ENCODE measurements at regions of chr7 and their contacts with region 1.

Region 1: DNA sequence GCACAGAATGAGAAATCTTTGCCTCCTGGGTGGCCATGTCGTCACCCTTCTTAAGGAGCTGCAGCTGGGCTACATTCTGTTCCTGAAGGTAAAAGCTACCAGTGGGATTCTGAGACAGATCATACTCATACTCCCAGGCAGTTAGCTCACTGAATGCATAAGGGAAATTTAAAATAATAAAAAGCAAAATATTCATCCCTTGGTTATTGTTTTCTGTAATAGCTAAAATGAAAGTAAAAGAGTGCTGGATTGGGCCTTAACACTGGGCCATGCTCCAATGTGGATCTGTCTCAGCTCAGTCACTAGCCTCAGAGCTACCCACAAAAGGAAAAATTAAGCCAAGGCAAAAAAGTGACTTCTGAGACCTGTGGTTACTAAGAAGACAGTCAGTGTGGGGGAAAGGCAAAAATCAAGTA is 8.9 kb upstream of the DYNC2I1 start:
- DNase-seq: no peak
- ATAC-seq: no peak
- H3K4me3 ChIP-seq: no peak overlapping the region
- H3K27ac ChIP-seq: no peak overlapping the region
- H3K4me1 ChIP-seq: peaks cover 39% of the 10 kb centered on the region
- H3K27me3 ChIP-seq: no peaks in the 10 kb centered on the region; a peak in 1 of 5 replicates
- CTCF ChIP-seq: no peak
- EP300 ChIP-seq: no peak
- POLR2A ChIP-seq: no peak
- RAD21 ChIP-seq: no peak

Region 2: DNA sequence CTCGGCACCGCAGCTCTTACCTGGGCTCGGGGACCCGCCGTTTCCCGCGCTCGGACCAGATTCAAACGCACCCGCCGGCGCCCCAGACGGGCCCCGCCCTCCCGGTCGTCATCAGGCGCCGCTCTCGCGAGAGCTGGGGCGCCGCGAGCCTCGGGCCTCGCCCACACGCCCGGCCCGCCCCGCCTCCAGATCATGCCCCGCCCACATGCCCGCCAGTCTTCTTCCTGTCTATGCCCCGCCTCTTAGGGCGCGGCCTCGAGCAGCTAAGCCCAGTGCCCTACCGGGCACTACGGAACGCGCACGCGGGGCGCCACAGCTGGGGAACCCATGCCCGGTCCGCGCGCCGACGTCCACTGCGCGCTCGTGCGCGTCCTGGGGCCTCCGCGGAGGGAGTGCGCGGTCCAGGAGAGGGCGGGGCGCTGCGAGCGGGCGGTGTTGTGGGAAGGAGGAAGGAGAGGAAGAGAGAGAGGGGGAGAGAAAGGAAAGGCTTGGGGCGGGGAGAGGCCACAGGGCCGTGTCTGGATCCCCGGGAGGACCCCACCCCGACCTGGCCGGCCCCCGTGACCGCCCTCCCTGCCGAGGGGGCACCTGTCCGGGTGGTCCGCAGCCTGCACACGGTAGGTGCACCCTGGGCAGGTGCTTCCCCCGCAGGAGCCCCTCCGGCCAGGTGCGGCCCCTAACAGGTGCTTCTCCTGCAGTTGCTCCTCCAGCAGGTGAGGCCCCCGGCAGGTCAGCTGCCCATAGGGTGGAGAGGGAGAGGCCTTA is 142.6 kb before region 1 on chr7 and contains the start of gene NCAPG2:
- CTCF ChIA-PET with region 1: no interaction called
- POLR2A ChIA-PET with region 1: interaction called, 10 read pairs
- in situ Hi-C with region 1: no loop called
- intact Hi-C with region 1: no loop called
- DNase-seq: peak; percentile 94
- ATAC-seq: peak; percentile 96
- H3K4me3 ChIP-seq: peak within 1 kb of the TSS; percentile 77 to 99 (median 98)
- H3K27ac ChIP-seq: peak within 1 kb of the TSS; percentile 71
- H3K4me1 ChIP-seq: peaks cover 53% of the 10 kb centered on the region
- H3K27me3 ChIP-seq: no peaks in the 10 kb centered on the region; a peak in 1 of 5 replicates
- CTCF ChIP-seq: peak; percentile 41; the same call in 1 of the 2 replicates
- EP300 ChIP-seq: no peak
- POLR2A ChIP-seq: peak; percentile 34 to 84; a peak in 3 of 4 replicates
- RAD21 ChIP-seq: peak; percentile 35; the same call in 1 of the 2 replicates
- total RNA-seq, gene NCAPG2: 30.7 and 46.3 TPM in 2 replicates

Region 3: GRCh38 chr7:158818325-158819213 is 28.9 kb before region 1 on chr7:
- CTCF ChIA-PET with region 1: no interaction called
- POLR2A ChIA-PET with region 1: interaction called, 34 read pairs
- in situ Hi-C with region 1: no loop called
- intact Hi-C with region 1: no loop called
- DNase-seq: peak; percentile 91
- ATAC-seq: peak; percentile 98
- H3K4me3 ChIP-seq: peak overlapping the region; percentile 50 to 66 (median 55)
- H3K27ac ChIP-seq: peak overlapping the region; percentile 96
- H3K4me1 ChIP-seq: peaks cover 76% of the 10 kb centered on the region
- H3K27me3 ChIP-seq: no peaks in the 10 kb centered on the region
- CTCF ChIP-seq: peak; percentile 66
- EP300 ChIP-seq: peak in 1 of 2 experiments; percentile 46; a peak in 3 of 4 replicates
- POLR2A ChIP-seq: peak; percentile 38 to 79; a peak in 3 of 4 replicates
- RAD21 ChIP-seq: peak; percentile 83

Region 4: DNA sequence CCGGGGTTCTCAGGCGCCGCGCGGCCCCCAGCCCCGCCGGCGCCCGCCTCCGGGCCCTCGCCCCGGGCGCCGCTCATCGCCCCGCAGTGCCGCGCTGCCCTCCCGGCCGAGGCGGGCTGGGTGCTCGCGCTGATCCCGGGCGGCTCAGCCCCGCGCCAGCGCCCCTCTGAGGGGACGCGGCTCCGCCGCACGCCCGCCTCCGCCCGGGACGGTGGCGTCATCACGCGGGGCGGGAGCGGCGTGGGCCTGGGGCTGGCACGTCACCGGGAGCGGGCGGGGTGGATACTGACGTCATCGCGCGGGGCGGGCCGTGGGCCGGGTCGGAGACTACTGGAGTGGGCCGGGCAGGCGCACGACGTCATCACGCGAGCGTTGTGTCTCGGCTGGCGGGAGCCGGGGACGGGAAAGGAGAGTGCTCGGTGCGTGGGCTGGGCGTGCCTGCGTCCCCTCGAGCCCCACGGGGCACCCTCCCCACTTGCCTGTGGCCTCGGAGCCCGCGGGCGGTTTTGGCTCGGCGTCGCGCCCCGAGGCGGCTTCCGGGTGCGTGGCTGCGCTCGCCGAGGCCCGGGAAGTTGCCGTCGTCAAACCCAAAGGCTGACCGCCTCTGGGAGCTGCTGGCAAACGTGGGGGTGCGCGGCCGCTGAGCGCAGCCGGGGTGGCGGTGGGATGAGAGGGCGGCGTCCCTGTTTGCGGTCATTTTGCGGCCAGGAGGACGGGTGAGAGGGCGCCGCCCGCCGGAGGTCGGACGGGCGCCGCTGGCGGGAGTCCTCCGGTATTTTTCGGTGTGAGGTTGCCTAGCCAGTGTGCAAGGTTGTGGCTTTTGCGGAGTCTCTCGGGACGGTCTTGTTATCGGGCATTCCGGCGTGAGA is 17.9 kb before region 1 on chr7 and contains the start of gene ESYT2:
- CTCF ChIA-PET with region 1: no interaction called
- POLR2A ChIA-PET with region 1: interaction called, 30 read pairs
- in situ Hi-C with region 1: no loop called
- intact Hi-C with region 1: loop called (anchors 1 kb)
- DNase-seq: peak; percentile 83
- ATAC-seq: peak; percentile 77
- H3K4me3 ChIP-seq: peak within 1 kb of the TSS; percentile 77 to 96 (median 90)
- H3K27ac ChIP-seq: peak within 1 kb of the TSS; percentile 90
- H3K4me1 ChIP-seq: peaks cover 41% of the 10 kb centered on the region
- H3K27me3 ChIP-seq: no peaks in the 10 kb centered on the region; a peak in 1 of 5 replicates
- CTCF ChIP-seq: peak; percentile 58
- EP300 ChIP-seq: no peak
- POLR2A ChIP-seq: peak; percentile 88 to 95
- RAD21 ChIP-seq: peak; percentile 60
- total RNA-seq, gene ESYT2: 26.0 and 37.3 TPM in 2 replicates

Region 5: DNA sequence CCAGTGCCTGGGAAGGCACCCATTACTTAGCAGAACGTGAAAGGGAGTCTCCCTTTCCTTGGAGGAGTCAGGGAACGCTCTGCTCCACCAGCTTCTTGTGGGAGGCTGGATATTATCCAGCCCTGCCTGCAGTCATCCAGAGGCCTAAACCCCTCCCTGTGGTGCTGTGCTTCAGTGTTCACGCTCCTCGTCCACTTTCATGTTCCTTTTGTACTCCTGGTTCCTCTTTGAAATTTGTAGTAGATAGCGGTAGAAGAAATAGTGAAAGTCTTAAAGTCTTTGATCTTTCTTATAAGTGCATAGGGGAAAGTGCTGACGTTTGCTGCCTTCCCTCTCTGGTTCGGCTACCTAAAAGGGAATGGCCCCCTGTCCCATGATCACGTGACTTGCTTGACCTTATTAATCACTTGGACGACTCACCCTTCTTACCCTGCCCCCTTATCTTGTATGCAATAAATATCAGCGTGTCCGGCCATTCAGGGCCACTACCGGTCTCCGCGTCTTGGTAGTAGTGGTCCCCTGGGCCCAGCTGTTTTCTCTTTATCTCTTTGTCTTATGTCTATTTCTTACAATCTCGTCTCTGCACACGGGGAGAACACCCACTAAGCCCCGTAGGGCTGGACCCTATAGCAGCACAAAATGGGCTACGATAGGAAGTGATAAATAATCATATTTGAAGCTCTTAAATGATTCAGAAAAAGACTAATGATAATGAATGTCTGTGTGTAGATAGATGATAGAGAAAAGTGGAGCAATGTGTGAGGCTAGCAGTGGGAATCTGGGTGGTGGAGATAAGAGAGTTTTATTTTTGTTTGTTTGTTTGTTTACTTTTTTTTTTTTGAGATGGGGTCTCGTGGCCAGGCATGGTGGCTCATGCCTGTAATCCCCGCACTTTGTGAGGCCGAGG is 12.3 kb before region 1 on chr7:
- CTCF ChIA-PET with region 1: no interaction called
- POLR2A ChIA-PET with region 1: interaction called, 30 read pairs
- in situ Hi-C with region 1: no loop called
- intact Hi-C with region 1: no loop called
- DNase-seq: no peak
- ATAC-seq: no peak
- H3K4me3 ChIP-seq: peak overlapping the region; percentile 16 to 37 (median 33); a peak in 4 of 6 replicates
- H3K27ac ChIP-seq: no peak overlapping the region
- H3K4me1 ChIP-seq: peaks cover 37% of the 10 kb centered on the region
- H3K27me3 ChIP-seq: no peaks in the 10 kb centered on the region
- CTCF ChIP-seq: no peak
- EP300 ChIP-seq: no peak
- POLR2A ChIP-seq: no peak
- RAD21 ChIP-seq: no peak

Region 6: GRCh38 chr7:158863611-158864506 is 16.4 kb after region 1 on chr7:
- CTCF ChIA-PET with region 1: no interaction called
- POLR2A ChIA-PET with region 1: interaction called, 63 read pairs
- in situ Hi-C with region 1: no loop called
- intact Hi-C with region 1: no loop called
- DNase-seq: peak; percentile 38
- ATAC-seq: peak; percentile 70
- H3K4me3 ChIP-seq: peak overlapping the region; percentile 46 to 71 (median 67); a peak in 5 of 6 replicates
- H3K27ac ChIP-seq: peak overlapping the region; percentile 61
- H3K4me1 ChIP-seq: peaks cover 61% of the 10 kb centered on the region
- H3K27me3 ChIP-seq: no peaks in the 10 kb centered on the region
- CTCF ChIP-seq: no peak
- EP300 ChIP-seq: no peak; a peak in 1 of 4 replicates
- POLR2A ChIP-seq: peak in 1 of 2 experiments; percentile 49; a peak in 1 of 4 replicates
- RAD21 ChIP-seq: no peak

Region 7: DNA sequence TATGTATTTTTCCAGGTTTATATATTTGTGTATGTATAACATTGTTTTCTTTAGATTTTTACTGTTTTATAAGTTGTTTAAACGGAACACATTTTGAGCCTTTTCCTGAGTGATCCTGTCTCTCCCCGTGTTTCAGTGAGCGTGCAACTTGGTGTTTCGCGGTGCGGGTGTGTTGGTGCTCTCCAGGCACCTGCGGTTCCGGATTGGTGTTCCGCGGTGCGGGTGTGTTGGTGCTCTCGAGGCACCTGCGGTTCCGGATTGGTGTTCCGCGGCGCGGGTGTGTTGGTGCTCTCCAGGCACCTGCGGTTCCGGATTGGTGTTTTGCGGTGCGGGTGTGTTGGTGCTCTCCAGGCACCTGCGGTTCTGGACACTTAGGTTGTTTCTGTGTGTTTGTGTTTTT is 29.5 kb after region 1 on chr7:
- CTCF ChIA-PET with region 1: no interaction called
- POLR2A ChIA-PET with region 1: no interaction called
- in situ Hi-C with region 1: no loop called
- intact Hi-C with region 1: no loop called
- DNase-seq: no peak
- ATAC-seq: no peak
- H3K4me3 ChIP-seq: no peak overlapping the region
- H3K27ac ChIP-seq: no peak overlapping the region
- H3K4me1 ChIP-seq: no peaks in the 10 kb centered on the region
- H3K27me3 ChIP-seq: no peaks in the 10 kb centered on the region
- CTCF ChIP-seq: no peak
- EP300 ChIP-seq: no peak
- POLR2A ChIP-seq: no peak
- RAD21 ChIP-seq: no peak

Region 8: DNA sequence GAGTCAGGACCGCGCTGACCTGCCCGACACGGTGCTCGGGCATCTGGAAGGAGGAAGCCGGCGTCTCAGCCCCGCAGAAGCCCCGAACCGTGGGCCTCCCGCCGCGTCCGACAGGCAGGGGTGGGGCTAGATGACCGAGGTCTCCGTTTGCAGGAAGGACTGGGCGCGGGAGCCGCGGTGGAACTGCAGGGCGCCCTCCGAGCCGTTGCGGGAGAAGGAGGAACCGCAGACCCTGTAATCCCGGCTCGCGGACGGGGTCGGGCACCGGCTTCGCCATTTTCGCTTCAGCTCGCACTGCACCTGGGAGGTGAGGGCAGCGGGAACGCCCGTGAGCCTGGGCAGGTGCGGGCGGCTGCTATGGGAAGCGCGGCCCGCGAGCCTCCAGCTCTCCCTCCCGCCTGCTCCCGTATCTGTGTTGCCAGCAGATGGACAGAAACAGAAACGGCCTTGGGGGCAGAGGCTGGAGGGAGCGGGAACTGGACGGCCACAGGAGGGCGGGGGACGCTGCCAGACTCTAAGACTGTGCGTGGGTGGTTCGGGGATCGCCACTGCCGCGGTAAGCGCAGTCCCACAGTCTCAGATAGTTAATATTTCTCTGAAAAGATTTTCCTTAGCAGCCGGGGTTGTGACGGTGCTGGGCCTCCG is 183.2 kb after region 1 on chr7:
- CTCF ChIA-PET with region 1: no interaction called
- POLR2A ChIA-PET with region 1: no interaction called
- in situ Hi-C with region 1: no loop called
- intact Hi-C with region 1: no loop called
- DNase-seq: peak; percentile 46
- ATAC-seq: peak; percentile 91
- H3K4me3 ChIP-seq: peak overlapping the region; percentile 48 to 72 (median 52); a peak in 5 of 6 replicates
- H3K27ac ChIP-seq: no peak overlapping the region
- H3K4me1 ChIP-seq: no peaks in the 10 kb centered on the region; the same call in 1 of the 2 replicates
- H3K27me3 ChIP-seq: peaks cover 1 to 72% of the 10 kb centered on the region in 2 experiments; a peak in 3 of 5 replicates
- CTCF ChIP-seq: peak; percentile 72
- EP300 ChIP-seq: no peak
- POLR2A ChIP-seq: no peak
- RAD21 ChIP-seq: peak; percentile 50

Region 9: GRCh38 chr7:159154243-159154642 is 306.8 kb after region 1 on chr7:
- CTCF ChIA-PET with region 1: no interaction called
- POLR2A ChIA-PET with region 1: no interaction called
- in situ Hi-C with region 1: no loop called
- intact Hi-C with region 1: no loop called
- DNase-seq: no peak
- ATAC-seq: peak; percentile 73
- H3K4me3 ChIP-seq: no peak overlapping the region
- H3K27ac ChIP-seq: no peak overlapping the region
- H3K4me1 ChIP-seq: peaks cover 21% of the 10 kb centered on the region
- H3K27me3 ChIP-seq: peaks cover 3 to 49% of the 10 kb centered on the region in 2 experiments; a peak in 4 of 5 replicates
- CTCF ChIP-seq: peak; percentile 56
- EP300 ChIP-seq: no peak
- POLR2A ChIP-seq: no peak
- RAD21 ChIP-seq: no peak

Measured in HepG2 (cell line).